ENCODE measurements at regions of chr4 and their contacts with region 1.

Region 1: DNA sequence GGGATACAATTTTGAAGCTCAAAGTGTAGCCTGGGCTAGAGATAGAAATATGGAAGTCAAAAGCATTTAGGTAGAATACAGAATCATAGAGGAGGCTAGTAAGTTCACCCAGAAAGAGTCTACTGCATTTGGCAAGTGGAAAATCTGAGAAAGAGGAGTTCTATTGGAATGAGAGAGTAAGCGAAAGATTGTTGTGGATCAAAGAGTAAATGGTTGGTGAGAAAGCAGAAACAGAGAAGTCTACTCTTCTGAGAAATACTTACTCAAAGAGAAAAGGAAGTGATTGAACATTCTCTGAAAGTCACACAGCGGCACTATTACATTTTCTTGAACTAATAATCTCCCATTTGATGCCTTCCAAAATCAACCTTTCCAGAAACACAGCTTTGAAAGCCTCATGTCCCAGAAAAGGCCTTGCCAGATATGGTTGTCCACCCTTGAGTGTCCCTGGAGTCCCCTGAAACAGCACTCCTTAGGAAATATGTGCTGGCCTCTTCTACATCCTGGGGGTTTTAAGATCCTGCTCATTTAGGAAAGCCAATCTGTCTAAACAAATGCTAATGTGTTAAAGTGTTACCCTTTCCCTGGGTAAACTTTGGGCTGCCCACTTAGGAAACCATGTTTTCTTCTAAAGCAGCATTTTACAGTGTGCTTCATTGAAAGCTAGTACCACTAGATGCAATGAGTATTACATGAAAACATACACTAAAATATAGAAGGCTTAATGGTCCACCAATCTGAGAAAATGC is 132.6 kb downstream of the INPP4B start:
- DNase-seq: no peak
- H3K4me3 Mint-ChIP-seq: peak overlapping the region; percentile 17
- H3K27ac Mint-ChIP-seq: peak overlapping the region; percentile 87
- H3K4me1 Mint-ChIP-seq: peaks cover 61% of the 10 kb centered on the region
- H3K27me3 Mint-ChIP-seq: no peaks in the 10 kb centered on the region

Region 2: DNA sequence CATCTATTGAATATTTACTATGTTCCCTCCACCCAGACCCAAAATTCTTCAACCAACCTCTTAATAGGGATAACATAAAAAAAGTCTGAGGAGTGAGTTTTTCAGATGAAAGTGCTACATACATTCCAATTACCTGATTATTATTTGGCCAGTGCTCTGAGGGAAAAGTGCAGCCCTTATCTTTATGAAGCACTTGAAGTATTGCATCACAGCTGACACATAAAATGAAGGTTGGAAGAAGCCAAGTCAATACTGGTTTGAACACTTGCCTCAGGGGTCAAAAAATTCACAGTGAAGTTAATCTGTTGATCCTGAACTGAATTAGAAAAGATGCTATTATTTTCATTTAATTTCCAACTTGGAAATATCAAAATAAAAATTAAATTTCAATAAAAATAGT is 366.2 kb before region 1 on chr4:
- CTCF ChIA-PET with region 1: no interaction called
- POLR2A ChIA-PET with region 1: no interaction called
- intact Hi-C with region 1: no loop called
- DNase-seq: no peak
- H3K4me3 Mint-ChIP-seq: peak overlapping the region; percentile 44
- H3K27ac Mint-ChIP-seq: peak overlapping the region; percentile 64
- H3K4me1 Mint-ChIP-seq: peaks cover 86% of the 10 kb centered on the region
- H3K27me3 Mint-ChIP-seq: no peaks in the 10 kb centered on the region

Region 3: GRCh38 chr4:142365387-142365786 is 348.1 kb before region 1 on chr4:
- CTCF ChIA-PET with region 1: no interaction called
- POLR2A ChIA-PET with region 1: no interaction called
- intact Hi-C with region 1: no loop called
- DNase-seq: no peak
- H3K4me3 Mint-ChIP-seq: no peak overlapping the region
- H3K27ac Mint-ChIP-seq: peak overlapping the region; percentile 77
- H3K4me1 Mint-ChIP-seq: peaks cover 73% of the 10 kb centered on the region
- H3K27me3 Mint-ChIP-seq: no peaks in the 10 kb centered on the region

Region 4: DNA sequence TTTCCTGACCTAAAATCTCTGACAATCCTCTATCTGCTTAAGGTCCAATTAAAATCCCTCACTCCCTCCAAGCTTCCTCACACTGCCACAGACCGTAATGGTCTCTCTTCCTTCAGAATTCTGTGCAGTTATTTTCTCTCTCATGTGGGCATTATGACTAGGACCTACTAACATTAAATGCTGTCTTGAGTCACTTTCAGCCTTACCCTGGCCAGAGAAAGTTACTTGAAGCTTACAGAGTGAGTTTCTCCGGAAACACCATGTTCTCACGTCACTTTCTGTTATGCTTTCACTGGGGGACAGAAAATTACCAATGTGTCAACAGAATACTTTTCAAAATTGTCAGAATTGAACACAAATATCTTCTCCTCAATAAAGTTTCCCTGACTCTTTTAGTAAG is 139.2 kb before region 1 on chr4:
- CTCF ChIA-PET with region 1: no interaction called
- POLR2A ChIA-PET with region 1: interaction called, 3 read pairs
- intact Hi-C with region 1: loop called (anchors 2 kb)
- DNase-seq: no peak
- H3K4me3 Mint-ChIP-seq: peak overlapping the region; percentile 70
- H3K27ac Mint-ChIP-seq: peak overlapping the region; percentile 88
- H3K4me1 Mint-ChIP-seq: peaks cover 70% of the 10 kb centered on the region
- H3K27me3 Mint-ChIP-seq: no peaks in the 10 kb centered on the region

Measured in activated CD4-positive, alpha-beta memory T cell treated with anti-CD3 and anti-CD28 coated beads for 36 hours (primary cell).